Activated T-helper 2 cell treated with anti-CD3 and anti-CD28 coated beads, Interferon-gamma antibody, Interleukin-2, Interleukin-4, amounts not matched to agents 10 μg/mL and 5 μg/mL and 100 μg/mL, durations not matched to agents 14 hours and 24 hours and 36 hours (primary cell): ENCODE measurements at regions of chr2 and their contacts with region 1.

Region 1: GRCh38 chr2:2613279-2614199 is 282.5 kb upstream of the MYT1L start:
- DNase-seq: peak; percentile 87
- H3K4me3 Mint-ChIP-seq: peak overlapping the region; percentile 75
- H3K27ac Mint-ChIP-seq: peak overlapping the region; percentile 73
- H3K4me1 Mint-ChIP-seq: peaks cover 7% of the 10 kb centered on the region
- H3K27me3 Mint-ChIP-seq: peaks cover 14% of the 10 kb centered on the region

Region 2: DNA sequence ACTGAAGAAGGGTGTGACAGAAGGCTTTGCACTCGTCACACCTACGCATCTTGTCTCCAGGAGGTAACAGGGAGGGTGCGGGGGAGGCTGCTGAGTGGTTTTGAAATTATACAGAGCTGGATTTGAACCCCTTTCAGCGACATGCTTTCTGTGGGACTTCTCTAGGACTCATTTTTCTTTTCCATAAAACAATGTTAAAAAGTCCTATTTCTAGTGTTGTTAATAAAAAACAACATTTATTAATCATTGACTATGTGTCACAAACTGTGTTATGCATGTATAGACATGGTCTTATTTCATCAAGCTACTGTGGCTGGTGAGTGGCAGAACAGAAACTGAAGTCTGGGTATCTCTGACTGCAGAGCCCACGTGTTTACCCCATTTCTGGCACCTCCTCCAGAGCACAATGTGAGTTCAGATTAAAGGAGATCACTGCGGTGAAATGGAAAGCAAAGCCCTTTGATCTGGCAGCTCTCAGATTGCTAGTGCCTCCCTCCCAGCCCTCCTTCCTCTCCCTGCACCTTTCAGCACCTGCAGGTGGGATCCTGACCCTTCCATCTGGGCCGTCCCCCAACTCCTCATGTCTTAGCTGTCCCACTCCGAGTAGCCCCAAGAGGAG is 33.0 kb after region 1 on chr2:
- intact Hi-C with region 1: loop called (anchors 2 kb)
- DNase-seq: peak; percentile 33
- H3K4me3 Mint-ChIP-seq: peak overlapping the region; percentile 15
- H3K27ac Mint-ChIP-seq: peak overlapping the region; percentile 42
- H3K4me1 Mint-ChIP-seq: peaks cover 22% of the 10 kb centered on the region
- H3K27me3 Mint-ChIP-seq: no peaks in the 10 kb centered on the region